ENCODE measurements at regions of chr11 and their contacts with region 1.

Region 1: DNA sequence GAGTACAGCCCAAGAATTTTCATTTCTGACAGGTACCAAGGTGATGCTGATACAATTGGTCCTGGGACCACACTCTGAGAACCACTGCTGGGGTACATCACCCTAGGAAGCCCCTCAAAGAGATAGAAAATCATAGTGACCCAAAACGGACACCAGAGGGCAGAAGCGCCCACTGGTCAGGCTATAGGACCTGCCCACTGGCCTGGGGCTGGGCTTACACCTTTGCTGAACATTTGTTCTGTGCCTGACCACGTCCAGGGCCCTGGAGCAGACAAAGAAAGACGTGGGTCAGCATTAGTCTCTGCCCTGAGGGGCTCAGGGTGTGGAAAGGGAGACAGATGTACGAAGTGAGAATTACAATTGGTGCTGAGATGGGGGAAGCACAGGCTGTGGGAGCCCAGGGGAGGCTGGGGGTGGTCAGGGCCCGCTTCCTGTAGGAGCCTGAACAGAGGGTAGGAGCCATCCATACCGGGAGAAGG is 14.4 kb upstream of the SERPINH1 start:
- DNase-seq: no peak
- ATAC-seq: peak; percentile 67
- H3K4me3 ChIP-seq: no peak overlapping the region
- H3K4me3 Mint-ChIP-seq: no peak overlapping the region
- H3K27ac ChIP-seq: no peak overlapping the region
- H3K27ac Mint-ChIP-seq: no peak overlapping the region
- H3K4me1 ChIP-seq: no peaks in the 10 kb centered on the region
- H3K4me1 Mint-ChIP-seq: peaks cover 0 to 7% (median 0%) of the 10 kb centered on the region in 7 donors
- H3K27me3 ChIP-seq: no peaks in the 10 kb centered on the region
- H3K27me3 Mint-ChIP-seq: peaks cover 0 to 4% (median 3%) of the 10 kb centered on the region in 5 donors

Region 2: DNA sequence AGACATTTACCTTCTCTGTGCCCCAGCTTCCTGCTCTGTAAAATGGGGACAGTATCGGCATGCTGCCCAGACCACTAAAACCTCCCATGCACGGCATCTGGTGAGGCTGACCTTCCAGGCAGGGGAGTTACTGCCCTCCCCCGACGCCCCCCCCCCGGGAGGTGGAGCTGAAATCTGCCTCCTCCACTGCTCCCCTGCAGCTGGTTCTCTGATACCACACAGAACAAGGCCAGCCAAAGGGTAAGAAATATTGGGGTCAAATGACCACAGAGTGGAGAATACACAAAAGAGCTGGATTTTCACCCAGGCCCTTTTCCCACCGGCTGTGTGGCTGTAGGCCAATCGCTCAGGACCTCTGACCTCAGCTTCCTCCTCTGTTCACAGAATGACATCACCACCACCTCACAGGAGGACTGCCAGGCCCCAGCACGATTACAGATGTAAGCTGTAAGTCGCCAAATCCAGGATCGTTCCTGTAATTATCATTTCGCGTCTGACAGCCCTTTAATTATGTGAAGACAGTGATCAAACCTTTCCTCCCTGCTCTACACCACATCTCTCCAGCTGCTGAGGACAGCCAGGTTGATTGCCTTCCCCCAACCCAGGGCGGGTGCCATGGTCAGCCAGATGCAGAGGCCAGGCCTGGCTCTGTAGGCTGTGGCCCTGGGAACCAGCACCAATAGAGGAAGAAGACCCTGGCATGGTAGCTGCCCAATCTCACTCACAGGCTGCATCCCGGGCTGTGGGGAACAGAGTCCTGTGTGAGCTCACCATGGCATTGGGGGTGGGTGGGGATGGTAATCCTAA is 78.9 kb before region 1 on chr11:
- CTCF ChIA-PET with region 1: no interaction called
- POLR2A ChIA-PET with region 1: no interaction called
- intact Hi-C with region 1: no loop called
- DNase-seq: no peak
- ATAC-seq: no peak
- H3K4me3 ChIP-seq: no peak overlapping the region
- H3K4me3 Mint-ChIP-seq: no peak overlapping the region
- H3K27ac ChIP-seq: no peak overlapping the region
- H3K27ac Mint-ChIP-seq: no peak overlapping the region
- H3K4me1 ChIP-seq: no peaks in the 10 kb centered on the region
- H3K4me1 Mint-ChIP-seq: peaks cover 0 to 4% (median 0%) of the 10 kb centered on the region in 7 donors
- H3K27me3 ChIP-seq: no peaks in the 10 kb centered on the region
- H3K27me3 Mint-ChIP-seq: peaks cover 0 to 4% (median 0%) of the 10 kb centered on the region in 5 donors

Region 3: GRCh38 chr11:75592715-75593114 is 45.1 kb after region 1 on chr11:
- CTCF ChIA-PET with region 1: interaction called, 5 read pairs
- POLR2A ChIA-PET with region 1: no interaction called
- intact Hi-C with region 1: loop called in 1 of 2 experiments (anchors 1 kb)
- DNase-seq: no peak
- ATAC-seq: no peak
- H3K4me3 ChIP-seq: no peak overlapping the region
- H3K4me3 Mint-ChIP-seq: no peak overlapping the region
- H3K27ac ChIP-seq: no peak overlapping the region
- H3K27ac Mint-ChIP-seq: peak overlapping the region in 1 of 9 donors; percentile 52
- H3K4me1 ChIP-seq: peaks cover 0 to 4% of the 10 kb centered on the region in 2 donors
- H3K4me1 Mint-ChIP-seq: peaks cover 2 to 29% (median 15%) of the 10 kb centered on the region in 7 donors
- H3K27me3 ChIP-seq: no peaks in the 10 kb centered on the region
- H3K27me3 Mint-ChIP-seq: peaks cover 0 to 37% (median 0%) of the 10 kb centered on the region in 5 donors

Region 4: GRCh38 chr11:75706260-75706729 is 158.7 kb after region 1 on chr11:
- CTCF ChIA-PET with region 1: no interaction called
- POLR2A ChIA-PET with region 1: no interaction called
- intact Hi-C with region 1: loop called in 1 of 2 experiments (anchors 1 kb)
- DNase-seq: peak; percentile 19 to 65 (median 53)
- ATAC-seq: peak; percentile 92
- H3K4me3 ChIP-seq: no peak overlapping the region
- H3K4me3 Mint-ChIP-seq: peak overlapping the region in 3 of 10 donors; percentile 23 to 57 (median 53)
- H3K27ac ChIP-seq: no peak overlapping the region
- H3K27ac Mint-ChIP-seq: no peak overlapping the region
- H3K4me1 ChIP-seq: no peaks in the 10 kb centered on the region
- H3K4me1 Mint-ChIP-seq: peaks cover 7 to 17% (median 11%) of the 10 kb centered on the region in 7 donors
- H3K27me3 ChIP-seq: no peaks in the 10 kb centered on the region
- H3K27me3 Mint-ChIP-seq: peaks cover 0 to 20% (median 0%) of the 10 kb centered on the region in 5 donors

Region 5: GRCh38 chr11:77140231-77140851 is 1592.7 kb after region 1 on chr11:
- CTCF ChIA-PET with region 1: no interaction called
- POLR2A ChIA-PET with region 1: no interaction called
- intact Hi-C with region 1: no loop called
- DNase-seq: no peak
- ATAC-seq: no peak
- H3K4me3 ChIP-seq: no peak overlapping the region
- H3K4me3 Mint-ChIP-seq: no peak overlapping the region
- H3K27ac ChIP-seq: no peak overlapping the region
- H3K27ac Mint-ChIP-seq: no peak overlapping the region
- H3K4me1 ChIP-seq: peaks cover 0 to 10% of the 10 kb centered on the region in 2 donors
- H3K4me1 Mint-ChIP-seq: peaks cover 0 to 19% (median 0%) of the 10 kb centered on the region in 7 donors
- H3K27me3 ChIP-seq: no peaks in the 10 kb centered on the region
- H3K27me3 Mint-ChIP-seq: peaks cover 20 to 39% (median 29%) of the 10 kb centered on the region in 5 donors